CD4-positive, alpha-beta T cell (primary cell): ENCODE measurements at regions of chr12 and their contacts with region 1.

Region 1: GRCh38 chr12:29317556-29318363 is 63.2 kb downstream of the ERGIC2 start:
- DNase-seq: peak in 13 of 14 experiments; percentile 12 to 82 (median 23)
- ATAC-seq: peak; percentile 100
- H3K4me3 ChIP-seq: no peak overlapping the region
- H3K4me3 Mint-ChIP-seq: no peak overlapping the region
- H3K27ac ChIP-seq: no peak overlapping the region
- H3K27ac Mint-ChIP-seq: no peak overlapping the region
- H3K4me1 ChIP-seq: peaks cover 4% of the 10 kb centered on the region
- H3K4me1 Mint-ChIP-seq: peaks cover 10% of the 10 kb centered on the region
- H3K27me3 ChIP-seq: no peaks in the 10 kb centered on the region
- H3K27me3 Mint-ChIP-seq: no peaks in the 10 kb centered on the region
- CTCF ChIP-seq: peak; percentile 91

Region 2: DNA sequence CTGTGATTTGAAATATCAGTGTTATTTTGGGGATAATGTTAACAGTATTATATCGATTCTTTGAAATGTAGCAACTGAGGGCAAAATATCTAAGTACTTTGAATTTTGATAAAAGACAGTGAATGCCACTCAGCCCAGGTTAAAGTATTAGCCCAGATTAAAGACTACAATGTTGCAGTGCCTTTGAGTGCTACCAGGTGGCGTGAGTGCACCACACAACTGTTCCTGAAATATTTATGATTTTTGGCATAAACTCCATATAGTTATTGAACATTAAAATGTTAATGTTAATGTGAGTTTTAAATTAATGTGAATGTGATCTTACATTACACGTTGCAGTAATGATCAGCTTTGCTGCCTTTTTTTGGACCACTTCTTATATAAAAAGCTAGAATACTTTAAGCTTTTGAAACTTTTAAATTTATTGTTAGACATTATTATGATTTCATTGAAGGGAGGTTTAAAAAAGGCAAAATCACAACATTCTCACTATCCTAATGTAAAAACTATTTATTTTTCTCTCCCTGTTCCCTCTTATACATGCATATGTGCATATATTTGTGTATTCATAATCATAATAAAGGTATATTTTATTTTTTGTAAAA is 1584.6 kb before region 1 on chr12:
- CTCF ChIA-PET with region 1: no interaction called
- POLR2A ChIA-PET with region 1: no interaction called
- intact Hi-C with region 1: loop called in 1 of 2 experiments (anchors 10 kb)
- DNase-seq: peak in 12 of 14 experiments; percentile 12 to 65 (median 30)
- ATAC-seq: peak; percentile 78
- H3K4me3 ChIP-seq: no peak overlapping the region
- H3K4me3 Mint-ChIP-seq: no peak overlapping the region
- H3K27ac ChIP-seq: no peak overlapping the region
- H3K27ac Mint-ChIP-seq: no peak overlapping the region
- H3K4me1 ChIP-seq: no peaks in the 10 kb centered on the region
- H3K4me1 Mint-ChIP-seq: no peaks in the 10 kb centered on the region
- H3K27me3 ChIP-seq: no peaks in the 10 kb centered on the region
- H3K27me3 Mint-ChIP-seq: no peaks in the 10 kb centered on the region
- CTCF ChIP-seq: peak; percentile 87

Region 3: GRCh38 chr12:29073628-29074239 is 244.0 kb before region 1 on chr12:
- CTCF ChIA-PET with region 1: interaction called, 42 read pairs
- POLR2A ChIA-PET with region 1: interaction called, 4 read pairs
- intact Hi-C with region 1: loop called (anchors 1 to 2 kb)
- DNase-seq: peak in 4 of 14 experiments; percentile 21 to 66 (median 60)
- ATAC-seq: peak; percentile 55
- H3K4me3 ChIP-seq: no peak overlapping the region
- H3K4me3 Mint-ChIP-seq: no peak overlapping the region
- H3K27ac ChIP-seq: no peak overlapping the region
- H3K27ac Mint-ChIP-seq: no peak overlapping the region
- H3K4me1 ChIP-seq: no peaks in the 10 kb centered on the region
- H3K4me1 Mint-ChIP-seq: no peaks in the 10 kb centered on the region
- H3K27me3 ChIP-seq: peaks cover 0 to 2% of the 10 kb centered on the region in 2 experiments
- H3K27me3 Mint-ChIP-seq: peaks cover 20% of the 10 kb centered on the region
- CTCF ChIP-seq: peak; percentile 70

Region 4: DNA sequence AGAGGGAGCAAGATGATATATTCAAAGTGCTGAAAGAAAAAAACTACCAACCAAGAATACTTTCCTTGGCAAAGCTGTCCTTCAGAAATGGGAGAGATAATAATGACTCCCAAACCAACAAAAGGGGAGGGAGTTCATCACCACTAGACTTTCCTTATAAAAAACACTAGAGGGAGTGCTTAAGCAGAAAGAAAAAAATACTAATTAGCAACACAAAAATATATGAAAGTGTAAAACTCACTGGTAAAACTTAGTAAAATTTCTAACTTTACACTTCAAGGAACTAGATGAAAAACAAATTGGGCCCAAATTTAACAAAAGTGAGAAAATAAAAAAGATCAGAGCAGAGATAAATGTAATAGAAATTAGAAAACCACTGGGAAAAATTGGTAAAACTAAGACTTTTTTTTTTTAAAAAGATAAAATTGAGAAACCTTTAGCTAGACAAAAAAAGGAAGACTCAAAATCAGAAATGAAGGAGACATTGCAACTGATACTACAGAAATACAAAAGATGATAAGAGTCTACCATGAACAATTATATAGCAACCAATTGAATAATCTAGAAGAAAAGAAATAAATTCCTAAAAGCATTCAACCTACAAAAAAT is 229.0 kb before region 1 on chr12:
- CTCF ChIA-PET with region 1: interaction called, 14 read pairs
- POLR2A ChIA-PET with region 1: interaction called, 4 read pairs
- intact Hi-C with region 1: loop called (anchors 1 to 2 kb)
- DNase-seq: peak in 2 of 14 experiments; percentile 34 to 41
- ATAC-seq: peak; percentile 46
- H3K4me3 ChIP-seq: no peak overlapping the region
- H3K4me3 Mint-ChIP-seq: no peak overlapping the region
- H3K27ac ChIP-seq: no peak overlapping the region
- H3K27ac Mint-ChIP-seq: no peak overlapping the region
- H3K4me1 ChIP-seq: no peaks in the 10 kb centered on the region
- H3K4me1 Mint-ChIP-seq: peaks cover 4% of the 10 kb centered on the region
- H3K27me3 ChIP-seq: no peaks in the 10 kb centered on the region
- H3K27me3 Mint-ChIP-seq: no peaks in the 10 kb centered on the region
- CTCF ChIP-seq: peak; percentile 67

Region 5: DNA sequence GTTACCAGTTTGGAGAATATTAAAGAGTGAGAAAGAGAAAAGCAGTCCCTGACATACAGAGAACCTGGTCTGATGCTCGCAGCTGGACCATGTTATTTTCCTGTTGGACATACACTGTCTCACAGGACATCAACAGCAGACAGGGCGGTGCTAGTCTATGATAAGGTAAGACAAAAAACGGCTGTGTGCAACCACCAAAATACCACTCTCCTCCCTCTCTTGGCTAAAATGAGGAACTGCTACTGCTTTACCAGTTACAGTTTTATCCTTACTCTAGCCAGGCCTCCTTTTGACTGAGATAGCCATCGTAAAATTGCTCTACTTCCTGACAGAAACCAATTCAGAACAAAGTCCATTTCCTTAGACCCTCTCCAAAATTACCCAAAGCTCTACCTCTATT is 110.2 kb after region 1 on chr12:
- CTCF ChIA-PET with region 1: no interaction called
- POLR2A ChIA-PET with region 1: no interaction called
- intact Hi-C with region 1: loop called in 1 of 2 experiments (anchors 5 kb)
- DNase-seq: peak in 5 of 14 experiments; percentile 1 to 47 (median 35)
- ATAC-seq: peak; percentile 74
- H3K4me3 ChIP-seq: no peak overlapping the region
- H3K4me3 Mint-ChIP-seq: no peak overlapping the region
- H3K27ac ChIP-seq: no peak overlapping the region
- H3K27ac Mint-ChIP-seq: no peak overlapping the region
- H3K4me1 ChIP-seq: no peaks in the 10 kb centered on the region
- H3K4me1 Mint-ChIP-seq: no peaks in the 10 kb centered on the region
- H3K27me3 ChIP-seq: no peaks in the 10 kb centered on the region
- H3K27me3 Mint-ChIP-seq: peaks cover 22% of the 10 kb centered on the region
- CTCF ChIP-seq: peak; percentile 63

Region 6: DNA sequence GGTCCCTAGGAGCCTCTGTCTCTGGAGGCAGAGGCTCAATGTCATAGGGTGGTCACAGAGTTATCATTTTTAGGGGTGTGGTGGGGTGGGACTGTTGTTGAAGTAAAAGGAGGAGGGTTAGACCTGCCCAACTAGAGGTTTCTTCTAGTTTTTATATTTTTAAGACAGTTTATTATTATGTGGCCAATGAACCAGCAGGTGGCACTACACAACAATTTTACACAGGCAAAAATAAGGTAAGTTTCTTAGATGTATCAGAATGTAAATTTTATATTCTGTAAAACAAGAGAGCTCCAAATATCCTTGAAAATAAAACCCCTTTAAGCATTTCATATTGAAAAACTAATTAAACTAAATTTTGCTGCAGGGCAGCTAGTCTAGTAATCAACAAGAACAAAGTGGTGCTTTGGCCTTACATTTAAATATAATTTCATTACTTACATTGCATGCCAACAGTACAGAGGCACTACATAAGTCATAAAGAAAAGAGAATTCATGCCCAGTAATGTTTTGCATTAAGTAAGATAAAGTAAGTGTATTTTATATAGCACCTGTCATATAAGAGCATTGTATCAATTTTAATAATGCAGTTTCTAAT is 201.9 kb after region 1 on chr12:
- CTCF ChIA-PET with region 1: no interaction called
- POLR2A ChIA-PET with region 1: no interaction called
- intact Hi-C with region 1: loop called in 1 of 2 experiments (anchors 10 kb)
- DNase-seq: peak in 5 of 14 experiments; percentile 1 to 58 (median 39)
- ATAC-seq: no peak
- H3K4me3 ChIP-seq: no peak overlapping the region
- H3K4me3 Mint-ChIP-seq: no peak overlapping the region
- H3K27ac ChIP-seq: no peak overlapping the region
- H3K27ac Mint-ChIP-seq: no peak overlapping the region
- H3K4me1 ChIP-seq: no peaks in the 10 kb centered on the region
- H3K4me1 Mint-ChIP-seq: no peaks in the 10 kb centered on the region
- H3K27me3 ChIP-seq: peaks cover 0 to 3% of the 10 kb centered on the region in 2 experiments
- H3K27me3 Mint-ChIP-seq: peaks cover 15% of the 10 kb centered on the region
- CTCF ChIP-seq: peak; percentile 72